Cardiac septum (tissue), 1 donor: ENCODE measurements at regions of chr7 and their contacts with region 1.

Region 1: DNA sequence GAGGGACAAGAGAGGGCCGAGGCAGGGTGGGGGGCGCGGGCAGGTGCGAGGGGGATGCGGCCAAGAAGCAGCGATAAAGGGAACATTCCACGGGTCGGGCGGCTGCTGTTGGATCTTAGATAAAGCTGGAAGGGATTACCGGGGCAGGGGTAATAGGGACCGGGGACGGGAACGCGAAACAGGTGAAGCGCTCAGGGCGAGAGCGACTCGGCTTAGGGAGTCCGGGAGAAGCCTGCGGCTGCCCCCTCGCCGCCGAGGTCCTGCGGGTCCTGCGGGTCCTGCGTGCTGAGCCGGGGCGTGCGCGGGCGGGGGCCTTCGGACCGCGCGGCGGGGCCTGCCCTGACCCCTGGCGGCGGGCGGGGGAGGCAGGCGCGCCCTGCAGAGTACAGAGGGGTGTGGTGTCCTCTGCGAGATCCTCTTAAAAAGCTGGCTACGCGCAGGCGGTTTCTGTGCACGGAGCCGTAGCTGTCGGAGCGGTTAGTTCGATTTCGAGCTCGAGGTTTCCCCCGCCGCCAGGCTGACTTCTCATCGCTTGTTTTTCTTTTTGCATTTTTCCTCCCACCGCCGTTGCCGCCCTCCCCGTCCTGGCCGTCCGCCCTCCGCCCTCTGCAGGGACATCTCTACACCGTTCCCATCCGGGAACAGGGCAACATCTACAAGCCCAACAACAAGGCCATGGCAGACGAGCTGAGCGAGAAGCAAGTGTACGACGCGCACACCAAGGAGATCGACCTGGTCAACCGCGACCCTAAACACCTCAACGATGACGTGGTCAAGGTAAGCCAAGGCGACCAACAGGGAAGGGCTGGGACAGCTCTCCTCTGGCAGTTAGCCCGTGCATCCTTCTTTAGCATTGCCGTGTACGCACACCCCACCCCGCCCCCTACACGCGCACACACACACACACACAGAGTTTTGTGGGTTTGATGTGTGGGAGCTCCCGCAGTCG is 1.4 kb downstream of the CAV1 start:
- DNase-seq: peak; percentile 89

Region 2: GRCh38 chr7:116258734-116259133 is 267.5 kb before region 1 on chr7:
- intact Hi-C with region 1: loop called (anchors 2 kb)
- DNase-seq: no peak

Region 3: DNA sequence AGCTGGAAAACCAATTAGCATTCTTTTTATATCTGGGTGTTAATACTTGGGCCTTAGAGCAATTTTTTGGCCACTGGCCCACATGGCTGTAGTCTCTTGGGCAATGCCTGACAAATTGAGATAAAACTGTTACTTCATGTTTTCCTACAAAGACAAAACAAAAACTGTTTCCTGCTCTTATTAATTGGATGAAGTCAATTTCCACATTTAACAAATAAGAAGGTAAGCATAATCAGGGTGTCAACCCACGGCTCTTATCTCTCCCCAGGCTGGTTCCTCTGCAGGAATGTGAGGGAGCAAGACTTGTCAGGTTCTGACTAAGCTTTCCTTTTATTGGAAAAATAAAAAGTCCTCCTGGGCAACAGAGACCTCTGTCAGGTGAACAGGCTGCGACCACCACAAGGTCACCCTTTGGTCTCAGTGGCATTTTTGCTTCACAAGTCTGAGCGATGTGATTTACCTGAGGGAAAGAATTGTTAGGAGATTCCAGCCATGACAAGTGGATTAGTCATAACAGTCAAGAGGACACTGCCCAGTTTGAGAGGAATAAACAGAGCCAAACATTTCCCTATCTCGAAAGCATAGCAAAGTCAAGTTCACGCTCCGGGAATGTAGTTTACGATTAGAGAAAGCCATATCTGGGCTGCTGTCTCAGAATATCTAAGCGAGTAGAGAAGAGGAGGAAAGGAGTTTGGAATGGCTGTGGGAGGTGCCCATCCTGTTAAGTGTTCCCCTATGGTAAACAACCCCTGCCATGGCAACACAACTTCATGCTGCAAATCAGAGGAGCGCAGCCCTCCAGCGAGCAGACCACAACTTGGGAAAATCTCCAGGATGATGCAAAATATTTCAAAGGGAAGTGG is 171.4 kb before region 1 on chr7:
- intact Hi-C with region 1: loop called (anchors 2 kb)
- DNase-seq: peak; percentile 83

Region 4: GRCh38 chr7:116499168-116500077 is 26.8 kb before region 1 on chr7 and contains the start of gene CAV2:
- intact Hi-C with region 1: loop called (anchors 2 kb)
- DNase-seq: peak; percentile 86
- total RNA-seq, gene CAV2: 311 TPM

Region 5: DNA sequence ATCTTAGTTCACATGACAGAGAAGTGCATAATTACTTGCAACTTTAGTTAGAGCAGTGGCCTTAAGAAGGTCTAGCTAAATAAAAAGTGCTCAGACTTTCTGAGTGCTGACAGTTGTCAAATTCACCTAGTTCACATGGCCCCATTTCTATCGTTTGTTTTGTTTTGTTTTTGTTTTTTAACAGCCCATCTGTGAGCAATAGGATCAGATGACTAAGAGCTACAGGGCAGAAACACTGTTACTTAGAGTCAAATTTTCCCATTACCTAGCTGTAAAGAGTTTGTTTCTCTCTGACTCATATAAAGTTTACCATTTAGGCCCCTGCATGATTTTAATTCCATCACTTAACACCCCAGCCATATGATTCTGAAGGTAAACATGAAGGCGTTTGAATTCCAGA is 17.5 kb after region 1 on chr7:
- intact Hi-C with region 1: loop called (anchors 2 kb)
- DNase-seq: no peak

Region 6: GRCh38 chr7:116809636-116810266 is 283.6 kb after region 1 on chr7:
- intact Hi-C with region 1: loop called (anchors 10 kb)
- DNase-seq: no peak